Naive thymus-derived CD4-positive, alpha-beta T cell (primary cell): ENCODE measurements at regions of chr19 and their contacts with region 1.

Region 1: GRCh38 chr19:54390942-54391577 is 24.2 kb upstream of the TTYH1 start:
- DNase-seq: peak; percentile 48 to 76 (median 60)
- ATAC-seq: peak; percentile 67
- H3K4me3 ChIP-seq: no peak overlapping the region
- H3K4me3 Mint-ChIP-seq: peak overlapping the region; percentile 60 to 81 (median 71)
- H3K27ac ChIP-seq: no peak overlapping the region
- H3K27ac Mint-ChIP-seq: peak overlapping the region; percentile 49 to 92 (median 80)
- H3K4me1 ChIP-seq: peaks cover 23 to 26% of the 10 kb centered on the region in 2 donors
- H3K4me1 Mint-ChIP-seq: peaks cover 32 to 41% (median 39%) of the 10 kb centered on the region in 7 donors
- H3K27me3 ChIP-seq: no peaks in the 10 kb centered on the region
- H3K27me3 Mint-ChIP-seq: peaks cover 0 to 12% (median 0%) of the 10 kb centered on the region in 5 donors

Region 2: GRCh38 chr19:54168174-54168917 is 222.7 kb before region 1 on chr19:
- CTCF ChIA-PET with region 1: no interaction called
- POLR2A ChIA-PET with region 1: no interaction called
- intact Hi-C with region 1: loop called in 1 of 2 experiments (anchors 2 kb)
- DNase-seq: peak; percentile 66 to 94 (median 82)
- ATAC-seq: peak; percentile 89
- H3K4me3 ChIP-seq: no peak overlapping the region
- H3K4me3 Mint-ChIP-seq: peak overlapping the region in 2 of 10 donors; percentile 8 to 28
- H3K27ac ChIP-seq: no peak overlapping the region
- H3K27ac Mint-ChIP-seq: no peak overlapping the region
- H3K4me1 ChIP-seq: peaks cover 4 to 12% of the 10 kb centered on the region in 2 donors
- H3K4me1 Mint-ChIP-seq: peaks cover 10 to 25% (median 17%) of the 10 kb centered on the region in 7 donors
- H3K27me3 ChIP-seq: no peaks in the 10 kb centered on the region
- H3K27me3 Mint-ChIP-seq: no peaks in the 10 kb centered on the region

Region 3: GRCh38 chr19:54319892-54320670 is 71.0 kb before region 1 on chr19:
- CTCF ChIA-PET with region 1: interaction called, 135 read pairs
- POLR2A ChIA-PET with region 1: interaction called, 20 read pairs
- intact Hi-C with region 1: loop called (anchors 1 kb)
- DNase-seq: no peak
- ATAC-seq: no peak
- H3K4me3 ChIP-seq: no peak overlapping the region
- H3K4me3 Mint-ChIP-seq: no peak overlapping the region
- H3K27ac ChIP-seq: no peak overlapping the region
- H3K27ac Mint-ChIP-seq: no peak overlapping the region
- H3K4me1 ChIP-seq: no peaks in the 10 kb centered on the region
- H3K4me1 Mint-ChIP-seq: peaks cover 0 to 6% (median 1%) of the 10 kb centered on the region in 7 donors
- H3K27me3 ChIP-seq: no peaks in the 10 kb centered on the region
- H3K27me3 Mint-ChIP-seq: peaks cover 8 to 27% (median 14%) of the 10 kb centered on the region in 5 donors

Region 4: GRCh38 chr19:54352546-54352945 is 38.5 kb before region 1 on chr19:
- CTCF ChIA-PET with region 1: interaction called, 23 read pairs
- POLR2A ChIA-PET with region 1: interaction called, 10 read pairs
- intact Hi-C with region 1: loop called in 1 of 2 experiments (anchors 2 kb)
- DNase-seq: no peak
- ATAC-seq: no peak
- H3K4me3 ChIP-seq: no peak overlapping the region
- H3K4me3 Mint-ChIP-seq: no peak overlapping the region
- H3K27ac ChIP-seq: peak overlapping the region; percentile 24
- H3K27ac Mint-ChIP-seq: peak overlapping the region in 7 of 9 donors; percentile 15 to 87 (median 74)
- H3K4me1 ChIP-seq: no peaks in the 10 kb centered on the region
- H3K4me1 Mint-ChIP-seq: peaks cover 3 to 24% (median 17%) of the 10 kb centered on the region in 7 donors
- H3K27me3 ChIP-seq: no peaks in the 10 kb centered on the region
- H3K27me3 Mint-ChIP-seq: peaks cover 0 to 23% (median 0%) of the 10 kb centered on the region in 5 donors

Region 5: DNA sequence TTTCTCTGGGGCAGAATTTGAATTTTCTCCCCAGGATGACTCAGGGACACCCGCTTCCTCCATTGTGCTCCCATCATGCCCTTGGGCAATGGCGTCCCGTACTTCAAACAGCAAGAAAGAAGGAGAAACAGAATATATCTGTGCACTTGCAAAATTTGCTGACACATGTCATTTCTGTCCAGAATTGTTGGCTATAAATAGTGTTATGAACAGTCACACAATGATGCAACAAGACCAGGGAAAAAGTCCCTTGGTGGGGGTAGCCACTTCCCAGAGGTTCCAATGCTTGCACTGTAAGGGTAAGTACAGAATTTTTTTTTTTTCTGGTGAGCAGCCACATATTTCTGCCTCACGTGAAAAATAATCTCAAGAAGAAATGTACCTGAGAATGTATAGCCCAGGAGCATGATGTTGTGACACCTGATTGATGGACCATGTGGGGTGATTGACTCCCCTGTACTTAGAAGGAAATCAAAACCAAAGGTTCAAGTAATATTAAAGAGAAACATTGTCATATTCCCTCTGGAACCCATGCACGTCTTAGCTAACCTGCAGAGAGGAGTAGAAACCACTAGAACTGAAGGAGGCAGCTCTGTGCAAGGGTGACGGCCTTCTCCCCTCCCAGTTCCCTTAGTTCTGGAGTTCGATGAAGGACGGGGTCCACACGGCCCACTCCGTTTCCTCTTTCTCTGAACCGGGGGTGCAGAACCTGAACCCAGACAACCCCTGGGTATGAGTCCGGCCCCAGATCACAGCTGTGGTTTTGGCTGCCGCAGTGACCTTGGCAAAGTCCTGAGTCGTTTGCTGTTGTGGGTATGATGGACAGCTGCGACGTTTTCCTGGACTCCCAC is 17.1 kb before region 1 on chr19:
- CTCF ChIA-PET with region 1: interaction called, 17 read pairs
- POLR2A ChIA-PET with region 1: interaction called, 39 read pairs
- intact Hi-C with region 1: loop called (anchors 1 kb)
- DNase-seq: no peak
- ATAC-seq: peak; percentile 56
- H3K4me3 ChIP-seq: no peak overlapping the region
- H3K4me3 Mint-ChIP-seq: peak overlapping the region; percentile 40 to 95 (median 88)
- H3K27ac ChIP-seq: no peak overlapping the region
- H3K27ac Mint-ChIP-seq: peak overlapping the region in 6 of 9 donors; percentile 14 to 79 (median 46)
- H3K4me1 ChIP-seq: peaks cover 50 to 67% of the 10 kb centered on the region in 2 donors
- H3K4me1 Mint-ChIP-seq: peaks cover 54 to 89% (median 79%) of the 10 kb centered on the region in 7 donors
- H3K27me3 ChIP-seq: no peaks in the 10 kb centered on the region
- H3K27me3 Mint-ChIP-seq: peaks cover 0 to 41% (median 0%) of the 10 kb centered on the region in 5 donors

Region 6: GRCh38 chr19:54448774-54449700 is 58.0 kb after region 1 on chr19 and contains the start of gene LENG8:
- CTCF ChIA-PET with region 1: interaction called, 3 read pairs
- POLR2A ChIA-PET with region 1: interaction called, 7 read pairs
- intact Hi-C with region 1: loop called in 1 of 2 experiments (anchors 5 kb)
- DNase-seq: peak; percentile 95 to 99 (median 98)
- ATAC-seq: peak; percentile 94
- H3K4me3 ChIP-seq: peak within 1 kb of the TSS; percentile 85
- H3K4me3 Mint-ChIP-seq: peak within 1 kb of the TSS; percentile 93 to 99 (median 97)
- H3K27ac ChIP-seq: peak within 1 kb of the TSS; percentile 94
- H3K27ac Mint-ChIP-seq: peak within 1 kb of the TSS; percentile 97 to 100 (median 100)
- H3K4me1 ChIP-seq: peaks cover 19 to 39% of the 10 kb centered on the region in 2 donors
- H3K4me1 Mint-ChIP-seq: peaks cover 31 to 61% (median 54%) of the 10 kb centered on the region in 7 donors
- H3K27me3 ChIP-seq: no peaks in the 10 kb centered on the region
- H3K27me3 Mint-ChIP-seq: peaks cover 0 to 3% (median 0%) of the 10 kb centered on the region in 5 donors
- total RNA-seq, gene LENG8: 238 to 685 (median 503) TPM